ENCODE measurements at regions of chr4 and their contacts with region 1.

Region 1: GRCh38 chr4:68349649-68350360 is at the start of gene YTHDC1:
- DNase-seq: peak; percentile 96
- H3K4me3 Mint-ChIP-seq: peak within 1 kb of the TSS; percentile 97
- H3K27ac Mint-ChIP-seq: peak within 1 kb of the TSS; percentile 95
- H3K4me1 Mint-ChIP-seq: peaks cover 32% of the 10 kb centered on the region
- H3K27me3 Mint-ChIP-seq: peaks cover 2% of the 10 kb centered on the region
- total RNA-seq, gene YTHDC1: 80.0 to 95.1 TPM

Region 2: DNA sequence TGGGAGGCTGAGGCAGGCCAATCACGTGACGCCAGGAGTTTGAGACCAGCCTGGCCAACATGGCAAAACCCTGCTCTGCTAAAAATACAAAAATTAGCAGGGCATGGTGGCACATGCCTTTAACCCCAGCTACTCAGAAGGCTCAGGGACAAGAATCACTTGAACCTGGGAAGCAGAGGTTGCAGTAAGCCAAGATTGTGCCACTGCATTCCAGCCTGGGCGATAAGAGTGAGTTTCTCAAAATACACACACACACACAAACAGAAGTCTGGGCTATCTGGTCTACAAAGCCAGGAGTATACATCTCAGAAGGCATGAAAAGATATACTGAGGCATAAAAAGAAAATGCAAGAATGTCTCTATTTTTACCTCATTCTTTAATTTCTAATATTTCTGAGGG is 11.2 kb before region 1 on chr4:
- CTCF ChIA-PET with region 1: no interaction called
- POLR2A ChIA-PET with region 1: interaction called, 14 read pairs
- DNase-seq: no peak
- H3K4me3 Mint-ChIP-seq: no peak overlapping the region
- H3K27ac Mint-ChIP-seq: no peak overlapping the region
- H3K4me1 Mint-ChIP-seq: peaks cover 29% of the 10 kb centered on the region
- H3K27me3 Mint-ChIP-seq: no peaks in the 10 kb centered on the region

Measured in activated CD4-positive, alpha-beta memory T cell treated with anti-CD3 and anti-CD28 coated beads, Interleukin-2, amount 10 ng/mL, durations not matched to agents 7 days and 5 days (primary cell).